Esophagus muscularis mucosa (tissue), 4 donors: ENCODE measurements at regions of chr13 and their contacts with region 1.

Region 1: DNA sequence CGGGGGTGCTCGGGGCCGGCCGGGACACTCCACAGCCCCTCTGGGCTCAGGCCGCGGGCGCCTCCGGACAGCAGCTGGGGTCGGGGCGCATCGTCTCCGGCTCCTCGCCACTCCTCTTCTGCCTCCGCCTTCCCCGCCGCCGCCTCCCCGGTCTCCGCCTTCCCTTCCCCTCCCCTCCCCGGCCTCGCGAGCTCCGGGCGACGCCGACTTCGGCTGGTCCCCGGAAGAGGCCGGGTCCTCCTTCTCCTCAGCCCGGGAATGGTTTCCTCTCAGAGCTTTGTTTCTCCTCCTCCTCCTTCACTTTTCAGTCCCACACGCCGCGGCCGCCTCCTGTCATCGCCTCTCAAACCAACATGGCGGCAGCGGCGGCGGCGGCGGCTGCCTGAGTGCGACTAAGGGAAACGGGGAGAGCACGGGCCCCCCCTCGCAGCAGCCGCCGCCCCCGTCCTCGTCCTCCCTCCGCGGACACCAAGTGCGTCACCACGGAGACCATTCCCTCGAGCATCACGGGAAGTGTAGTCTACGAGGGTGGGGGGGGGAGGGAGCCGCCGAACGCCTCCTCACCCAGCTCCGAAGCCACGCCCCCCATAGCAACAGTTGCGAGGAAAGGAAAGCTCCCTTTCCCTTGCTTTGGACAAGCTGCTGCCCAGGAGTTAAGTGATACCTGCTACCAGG is at the start of gene UBL3:
- DNase-seq: peak; percentile 99
- H3K4me3 ChIP-seq: peak within 1 kb of the TSS; percentile 80 to 96 (median 84)
- H3K27ac ChIP-seq: peak within 1 kb of the TSS; percentile 96 to 99 (median 98)
- H3K4me1 ChIP-seq: peaks cover 15 to 23% (median 21%) of the 10 kb centered on the region in 4 donors
- H3K27me3 ChIP-seq: no peaks in the 10 kb centered on the region
- CTCF ChIP-seq: no peak
- EP300 ChIP-seq: no peak
- POLR2A ChIP-seq: peak; percentile 75
- total RNA-seq, gene UBL3: 30.2 to 44.5 (median 32.6) TPM

Region 2: GRCh38 chr13:29508130-29508875 is 342.1 kb before region 1 on chr13:
- intact Hi-C with region 1: loop called (anchors 5 kb)
- DNase-seq: peak; percentile 94
- H3K4me3 ChIP-seq: no peak overlapping the region
- H3K27ac ChIP-seq: peak overlapping the region in 3 of 4 donors; percentile 31 to 61 (median 36)
- H3K4me1 ChIP-seq: peaks cover 9 to 38% (median 36%) of the 10 kb centered on the region in 4 donors
- H3K27me3 ChIP-seq: peaks cover 0 to 22% (median 0%) of the 10 kb centered on the region in 4 donors
- CTCF ChIP-seq: peak; percentile 87 to 99 (median 93)
- EP300 ChIP-seq: no peak
- POLR2A ChIP-seq: no peak

Region 3: GRCh38 chr13:29595380-29596063 is 254.8 kb before region 1 on chr13 and contains the start of gene SLC7A1:
- intact Hi-C with region 1: loop called (anchors 5 kb)
- DNase-seq: peak; percentile 93
- H3K4me3 ChIP-seq: peak within 1 kb of the TSS; percentile 91 to 99 (median 95)
- H3K27ac ChIP-seq: peak within 1 kb of the TSS; percentile 94 to 98 (median 96)
- H3K4me1 ChIP-seq: peaks cover 0 to 41% (median 30%) of the 10 kb centered on the region in 4 donors
- H3K27me3 ChIP-seq: peaks cover 0 to 6% (median 0%) of the 10 kb centered on the region in 4 donors
- CTCF ChIP-seq: no peak
- EP300 ChIP-seq: no peak
- POLR2A ChIP-seq: no peak
- total RNA-seq, gene SLC7A1: 15.0 to 28.8 (median 21.6) TPM

Region 4: GRCh38 chr13:29771247-29771646 is 79.1 kb before region 1 on chr13:
- intact Hi-C with region 1: loop called (anchors 5 kb)
- DNase-seq: no peak
- H3K4me3 ChIP-seq: no peak overlapping the region
- H3K27ac ChIP-seq: no peak overlapping the region
- H3K4me1 ChIP-seq: peaks cover 0 to 16% (median 6%) of the 10 kb centered on the region in 4 donors
- H3K27me3 ChIP-seq: no peaks in the 10 kb centered on the region
- CTCF ChIP-seq: peak; percentile 42 to 56 (median 49)
- EP300 ChIP-seq: no peak
- POLR2A ChIP-seq: no peak

Region 5: GRCh38 chr13:29905845-29906244 is 55.5 kb after region 1 on chr13:
- intact Hi-C with region 1: loop called (anchors 5 kb)
- DNase-seq: no peak
- H3K4me3 ChIP-seq: no peak overlapping the region
- H3K27ac ChIP-seq: peak overlapping the region in 3 of 4 donors; percentile 40 to 62 (median 48)
- H3K4me1 ChIP-seq: peaks cover 5 to 37% (median 28%) of the 10 kb centered on the region in 4 donors
- H3K27me3 ChIP-seq: no peaks in the 10 kb centered on the region
- CTCF ChIP-seq: no peak
- EP300 ChIP-seq: no peak
- POLR2A ChIP-seq: no peak

Region 6: DNA sequence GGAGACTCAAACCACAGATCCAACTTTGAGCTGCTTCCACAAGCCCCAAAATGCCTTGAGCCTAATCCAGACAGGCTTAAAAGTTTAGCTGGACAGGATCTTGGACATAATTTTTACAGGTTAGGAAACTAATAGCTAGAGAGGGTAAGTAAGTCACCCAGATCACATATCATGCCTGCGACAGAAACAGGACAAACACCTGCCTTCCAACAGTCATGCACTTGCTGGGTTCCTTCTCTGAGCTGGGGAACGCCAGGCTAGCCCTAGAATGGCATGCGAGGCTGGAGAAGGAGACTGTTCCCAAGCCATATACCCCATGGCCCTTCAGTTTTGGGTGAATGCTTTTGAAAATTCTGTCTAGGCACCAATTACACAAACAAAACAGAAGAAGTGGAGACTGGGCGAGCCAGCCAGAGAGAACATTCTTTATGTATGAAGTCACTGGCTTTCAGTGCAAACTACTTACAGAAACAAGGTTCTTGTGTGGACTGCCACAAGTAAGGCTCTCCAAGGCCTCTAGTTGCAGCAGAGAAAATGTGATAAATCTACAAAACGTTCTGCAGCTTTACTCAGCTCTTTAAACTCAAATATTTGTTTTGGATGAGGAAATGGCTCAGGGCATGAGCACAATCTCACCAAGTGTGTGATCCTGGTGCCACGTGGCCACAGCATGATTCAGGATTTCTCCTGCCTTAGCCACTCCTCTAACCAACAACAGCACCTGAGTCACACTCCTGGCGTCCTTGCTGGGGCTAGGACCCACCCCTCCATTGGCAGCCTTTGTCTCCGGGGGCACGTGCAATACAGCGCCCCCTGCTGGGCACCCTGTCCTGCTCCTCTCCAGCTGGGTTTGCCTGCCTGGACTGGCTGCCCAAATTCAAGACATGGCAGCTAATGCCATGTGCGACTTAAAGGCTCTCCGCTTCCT is 73.5 kb after region 1 on chr13:
- intact Hi-C with region 1: loop called (anchors 5 kb)
- DNase-seq: no peak
- H3K4me3 ChIP-seq: peak overlapping the region in 1 of 4 donors; percentile 9
- H3K27ac ChIP-seq: peak overlapping the region; percentile 76 to 92 (median 82)
- H3K4me1 ChIP-seq: peaks cover 27 to 57% (median 48%) of the 10 kb centered on the region in 4 donors
- H3K27me3 ChIP-seq: no peaks in the 10 kb centered on the region
- CTCF ChIP-seq: peak; percentile 62 to 69 (median 66)
- EP300 ChIP-seq: no peak
- POLR2A ChIP-seq: no peak

Region 7: DNA sequence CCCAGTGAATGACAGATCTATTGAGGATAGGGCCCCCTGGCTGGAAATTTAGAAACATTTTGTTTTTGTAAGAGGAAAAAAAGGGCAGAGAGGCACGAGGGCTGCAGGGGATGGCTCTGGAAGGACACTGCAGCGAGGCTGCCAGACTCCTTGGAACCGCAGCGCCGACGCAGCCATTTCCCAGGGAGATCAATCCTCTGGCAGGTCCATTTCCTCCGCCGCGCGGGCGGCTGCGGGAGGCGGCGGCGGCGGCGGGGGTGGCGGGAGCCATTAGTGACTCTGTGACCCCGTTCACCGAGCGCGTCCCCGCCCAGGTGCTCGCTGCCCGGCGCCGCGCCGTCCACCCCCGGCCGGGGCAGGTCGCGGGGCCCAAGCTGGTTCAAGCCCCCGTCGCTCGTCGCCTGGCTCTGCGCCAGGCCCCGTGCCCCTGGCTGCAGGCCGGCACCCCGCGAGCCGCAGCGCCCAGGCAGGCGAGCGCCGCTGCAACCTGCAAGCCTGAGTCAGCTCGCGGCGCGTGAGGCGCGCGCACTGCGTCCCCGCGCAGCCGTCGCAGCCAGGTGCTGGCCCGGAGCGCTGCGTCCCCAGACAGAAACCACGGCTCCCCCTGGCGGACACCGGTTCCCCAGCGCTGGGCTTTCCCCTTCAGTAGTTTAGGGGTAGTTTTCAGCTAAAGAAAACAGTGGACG is 264.4 kb after region 1 on chr13:
- intact Hi-C with region 1: loop called (anchors 2 kb)
- DNase-seq: peak; percentile 95
- H3K4me3 ChIP-seq: peak overlapping the region; percentile 67 to 78 (median 72)
- H3K27ac ChIP-seq: peak overlapping the region; percentile 31 to 73 (median 59)
- H3K4me1 ChIP-seq: peaks cover 22 to 53% (median 48%) of the 10 kb centered on the region in 4 donors
- H3K27me3 ChIP-seq: no peaks in the 10 kb centered on the region
- CTCF ChIP-seq: peak; percentile 89 to 97 (median 92)
- EP300 ChIP-seq: no peak
- POLR2A ChIP-seq: no peak

Region 8: DNA sequence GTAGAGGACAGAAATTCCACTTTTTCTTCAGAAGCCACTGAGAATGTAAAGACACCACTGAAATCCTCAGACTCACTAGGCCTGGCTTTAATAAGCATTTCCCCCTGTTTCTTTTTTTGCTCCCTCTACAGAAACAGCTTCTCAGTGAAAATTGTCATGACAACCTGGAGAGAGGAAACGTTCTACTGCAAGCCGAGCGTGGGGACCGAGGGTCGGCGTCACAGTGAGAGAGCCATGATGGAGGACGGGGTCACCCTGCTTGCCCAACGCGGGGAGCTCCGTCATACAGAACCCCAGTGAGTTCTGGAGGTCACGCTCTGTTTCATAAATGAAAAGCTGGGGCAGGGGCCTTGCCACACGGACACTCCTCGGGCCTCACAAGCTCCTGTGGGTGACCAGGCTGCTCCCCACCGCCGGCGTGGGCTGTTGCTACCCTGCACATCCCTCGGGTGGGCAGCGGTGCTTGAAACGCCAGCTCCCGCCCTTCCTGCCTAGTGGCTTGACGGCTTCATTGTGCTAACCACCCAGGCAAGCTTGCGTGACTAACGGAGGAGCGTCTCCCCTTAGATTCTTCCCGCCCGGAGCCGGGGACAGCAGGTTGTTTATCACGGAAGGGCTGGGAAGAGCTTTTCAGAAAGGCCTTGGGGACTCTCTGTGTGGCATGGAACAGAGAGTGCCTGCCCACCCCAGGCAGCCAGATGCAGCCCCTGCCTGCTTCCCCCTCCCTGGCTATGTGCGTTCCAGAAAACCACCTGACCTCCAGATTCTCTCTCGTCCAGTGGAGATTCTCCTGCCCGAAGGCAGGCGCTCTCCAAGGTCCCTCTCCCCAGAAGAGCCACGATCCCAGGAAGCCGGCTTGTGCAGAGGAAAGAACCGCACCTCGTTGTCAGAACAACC is 303.4 kb after region 1 on chr13:
- intact Hi-C with region 1: no loop called
- DNase-seq: no peak
- H3K4me3 ChIP-seq: no peak overlapping the region
- H3K27ac ChIP-seq: no peak overlapping the region
- H3K4me1 ChIP-seq: no peaks in the 10 kb centered on the region
- H3K27me3 ChIP-seq: peaks cover 0 to 6% (median 0%) of the 10 kb centered on the region in 4 donors
- CTCF ChIP-seq: no peak
- EP300 ChIP-seq: no peak
- POLR2A ChIP-seq: no peak